ENCODE measurements at regions of chr1 and their contacts with region 1.

Region 1: DNA sequence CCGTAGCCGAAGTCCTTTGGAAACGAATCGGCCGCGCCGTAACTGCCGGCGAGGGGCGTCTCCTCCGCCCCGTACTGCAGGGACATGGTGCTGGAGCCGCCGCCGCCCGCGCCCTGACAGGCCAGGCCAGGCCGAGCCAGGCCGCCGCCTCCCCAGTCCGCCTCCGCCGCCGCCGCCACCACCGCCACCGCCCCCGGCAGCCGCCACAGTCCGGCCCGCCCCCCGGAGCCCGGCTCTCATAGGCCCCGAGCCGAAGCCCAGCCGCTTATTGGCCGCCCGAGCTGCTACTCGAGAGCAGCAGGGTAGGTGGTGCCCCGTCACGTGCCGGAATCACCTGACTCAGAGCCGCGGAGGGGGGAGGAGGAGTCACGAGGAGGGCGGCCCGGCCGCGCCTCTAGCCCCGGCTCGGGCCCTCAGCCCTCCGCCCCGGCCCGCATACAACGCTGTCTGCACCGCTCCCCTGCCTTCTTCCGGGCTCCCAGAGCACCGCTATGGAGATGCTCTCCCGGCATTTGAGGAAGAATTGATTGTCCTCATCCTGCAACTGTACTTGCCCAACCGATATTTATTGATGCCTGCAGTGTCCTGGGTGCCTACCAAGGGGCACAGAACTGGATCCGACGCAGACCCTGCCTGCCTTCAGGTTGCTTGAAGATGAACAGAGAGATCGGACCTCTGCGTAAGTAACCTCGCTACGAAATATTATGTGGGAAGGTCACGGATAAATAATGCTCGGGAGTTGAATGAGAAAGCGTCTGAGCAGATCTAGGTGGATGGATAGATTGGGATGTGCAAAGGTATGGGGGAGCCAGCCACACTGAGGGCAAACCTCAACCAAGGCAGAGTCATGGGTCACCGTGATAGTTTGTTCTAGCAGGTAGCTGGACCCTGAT is at the start of gene RRAGC:
- DNase-seq: peak; percentile 98
- ATAC-seq: peak; percentile 92
- H3K4me3 ChIP-seq: peak within 1 kb of the TSS; percentile 68 to 92 (median 85)
- H3K4me3 Mint-ChIP-seq: peak within 1 kb of the TSS; percentile 93
- H3K27ac ChIP-seq: peak within 1 kb of the TSS; percentile 82 to 91
- H3K27ac Mint-ChIP-seq: peak within 1 kb of the TSS; percentile 96
- H3K4me1 ChIP-seq: peaks cover 22 to 31% of the 10 kb centered on the region in 2 donors
- H3K4me1 Mint-ChIP-seq: peaks cover 53% of the 10 kb centered on the region
- H3K27me3 ChIP-seq: no peaks in the 10 kb centered on the region
- H3K27me3 Mint-ChIP-seq: no peaks in the 10 kb centered on the region
- CTCF ChIP-seq: no peak
- total RNA-seq, gene RRAGC: 37.6 and 39.3 TPM in 2 replicates

Region 2: GRCh38 chr1:37919277-37919676 is 940.5 kb before region 1 on chr1:
- CTCF ChIA-PET with region 1: no interaction called
- POLR2A ChIA-PET with region 1: no interaction called
- intact Hi-C with region 1: loop called (anchors 2 kb)
- DNase-seq: peak; percentile 23
- ATAC-seq: no peak
- H3K4me3 ChIP-seq: no peak overlapping the region
- H3K4me3 Mint-ChIP-seq: no peak overlapping the region
- H3K27ac ChIP-seq: no peak overlapping the region
- H3K27ac Mint-ChIP-seq: no peak overlapping the region
- H3K4me1 ChIP-seq: peaks cover 55 to 56% of the 10 kb centered on the region in 2 donors
- H3K4me1 Mint-ChIP-seq: peaks cover 45% of the 10 kb centered on the region
- H3K27me3 ChIP-seq: no peaks in the 10 kb centered on the region
- H3K27me3 Mint-ChIP-seq: no peaks in the 10 kb centered on the region
- CTCF ChIP-seq: peak; percentile 53

Region 3: DNA sequence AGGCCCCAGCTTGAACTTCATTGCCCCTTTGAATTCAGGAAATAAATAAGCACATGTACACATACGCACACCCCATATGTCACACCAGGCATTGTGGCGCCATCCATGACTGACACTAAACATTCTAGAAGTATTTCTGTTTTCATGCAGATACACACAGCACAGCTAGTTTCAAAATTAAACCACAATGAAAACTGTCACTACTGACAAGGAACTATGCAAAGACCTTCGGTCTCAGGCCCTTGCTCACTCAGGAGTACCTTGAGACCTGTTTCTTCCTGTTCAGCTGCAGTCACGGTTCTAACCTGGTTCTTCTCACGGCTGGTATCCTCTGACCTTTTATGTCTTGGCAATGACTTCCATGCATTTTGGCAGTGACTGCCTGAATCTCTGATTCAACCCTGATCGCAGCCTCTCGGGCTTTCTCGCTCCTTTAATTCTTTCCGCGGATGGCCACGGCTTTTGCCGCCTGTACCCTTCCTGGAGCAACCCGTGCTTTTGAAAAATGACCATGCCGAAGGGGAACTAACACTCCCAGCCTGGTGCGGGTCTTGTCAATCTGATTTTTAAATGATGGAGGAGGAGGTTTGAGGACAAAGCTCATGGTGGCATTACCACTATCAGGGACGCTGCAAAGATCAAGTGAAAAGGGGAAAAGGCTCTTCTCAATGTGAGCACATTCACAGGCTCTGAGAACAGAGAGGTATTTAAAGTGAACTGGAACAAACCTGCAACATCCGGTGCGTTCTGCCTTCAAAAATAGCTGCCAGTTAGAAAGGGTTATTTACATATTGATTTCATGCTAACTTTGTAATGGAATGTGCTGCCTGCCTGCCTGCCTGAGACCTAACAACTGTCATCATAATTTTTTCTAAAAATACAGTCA is 384.8 kb before region 1 on chr1:
- CTCF ChIA-PET with region 1: no interaction called
- POLR2A ChIA-PET with region 1: no interaction called
- intact Hi-C with region 1: loop called (anchors 5 kb)
- DNase-seq: peak; percentile 88
- ATAC-seq: peak; percentile 80
- H3K4me3 ChIP-seq: peak overlapping the region; percentile 51 to 74 (median 62)
- H3K4me3 Mint-ChIP-seq: peak overlapping the region; percentile 94
- H3K27ac ChIP-seq: peak overlapping the region; percentile 90 to 96
- H3K27ac Mint-ChIP-seq: peak overlapping the region; percentile 99
- H3K4me1 ChIP-seq: peaks cover 34 to 49% of the 10 kb centered on the region in 2 donors
- H3K4me1 Mint-ChIP-seq: peaks cover 69% of the 10 kb centered on the region
- H3K27me3 ChIP-seq: no peaks in the 10 kb centered on the region
- H3K27me3 Mint-ChIP-seq: no peaks in the 10 kb centered on the region
- CTCF ChIP-seq: no peak

Region 4: DNA sequence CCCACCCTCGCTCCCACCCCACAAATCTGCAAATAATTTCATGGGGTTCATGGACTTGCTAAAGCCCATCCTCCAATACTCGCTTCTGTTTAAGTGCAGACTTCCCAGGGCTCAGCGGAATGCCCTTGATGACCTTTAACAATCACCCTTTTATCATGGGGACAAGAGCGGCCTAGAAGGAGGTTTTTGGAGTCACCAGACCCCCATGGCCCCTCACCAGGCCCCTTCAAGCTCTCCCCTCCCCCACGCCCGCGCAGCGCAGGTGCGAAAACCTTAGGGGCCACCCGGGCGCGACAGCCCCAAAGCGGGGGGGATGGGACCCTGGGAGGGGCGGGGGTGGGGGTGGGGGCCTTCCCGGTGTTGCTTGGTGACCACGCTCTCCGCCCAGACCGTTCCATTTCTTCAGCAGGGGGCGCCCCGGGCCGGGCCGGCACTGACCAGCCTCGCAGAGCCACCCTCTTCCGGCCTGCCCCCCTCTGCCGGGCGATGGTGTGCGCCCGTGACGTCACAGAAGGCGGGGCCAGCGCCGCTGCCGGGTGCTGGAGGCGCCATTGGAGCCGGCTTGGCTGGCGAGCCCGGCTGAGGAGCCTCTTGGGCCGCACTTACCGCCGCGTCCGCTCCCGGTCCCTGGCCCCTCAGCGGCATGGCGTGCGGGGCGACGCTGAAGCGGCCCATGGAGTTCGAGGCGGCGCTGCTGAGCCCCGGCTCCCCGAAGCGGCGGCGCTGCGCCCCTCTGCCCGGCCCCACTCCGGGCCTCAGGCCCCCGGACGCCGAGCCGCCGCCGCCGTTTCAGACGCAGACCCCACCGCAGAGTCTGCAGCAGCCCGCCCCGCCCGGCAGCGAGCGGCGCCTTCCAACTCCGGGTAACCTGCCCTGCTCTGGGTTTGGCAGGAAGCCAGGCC is 131.2 kb after region 1 on chr1 and contains the start of gene AKIRIN1:
- CTCF ChIA-PET with region 1: no interaction called
- POLR2A ChIA-PET with region 1: interaction called, 3 read pairs
- intact Hi-C with region 1: loop called (anchors 1 kb)
- DNase-seq: peak; percentile 96
- ATAC-seq: peak; percentile 92
- H3K4me3 ChIP-seq: peak within 1 kb of the TSS; percentile 58 to 89 (median 80)
- H3K4me3 Mint-ChIP-seq: peak within 1 kb of the TSS; percentile 89
- H3K27ac ChIP-seq: peak within 1 kb of the TSS; percentile 86 to 95
- H3K27ac Mint-ChIP-seq: peak within 1 kb of the TSS; percentile 89
- H3K4me1 ChIP-seq: peaks cover 19 to 22% of the 10 kb centered on the region in 2 donors
- H3K4me1 Mint-ChIP-seq: peaks cover 30% of the 10 kb centered on the region
- H3K27me3 ChIP-seq: peaks cover 0 to under 1% (median 0%) of the 10 kb centered on the region in 4 experiments
- H3K27me3 Mint-ChIP-seq: peaks cover 3% of the 10 kb centered on the region
- CTCF ChIP-seq: no peak
- total RNA-seq, gene AKIRIN1: 59.7 and 61.9 TPM in 2 replicates

Region 5: DNA sequence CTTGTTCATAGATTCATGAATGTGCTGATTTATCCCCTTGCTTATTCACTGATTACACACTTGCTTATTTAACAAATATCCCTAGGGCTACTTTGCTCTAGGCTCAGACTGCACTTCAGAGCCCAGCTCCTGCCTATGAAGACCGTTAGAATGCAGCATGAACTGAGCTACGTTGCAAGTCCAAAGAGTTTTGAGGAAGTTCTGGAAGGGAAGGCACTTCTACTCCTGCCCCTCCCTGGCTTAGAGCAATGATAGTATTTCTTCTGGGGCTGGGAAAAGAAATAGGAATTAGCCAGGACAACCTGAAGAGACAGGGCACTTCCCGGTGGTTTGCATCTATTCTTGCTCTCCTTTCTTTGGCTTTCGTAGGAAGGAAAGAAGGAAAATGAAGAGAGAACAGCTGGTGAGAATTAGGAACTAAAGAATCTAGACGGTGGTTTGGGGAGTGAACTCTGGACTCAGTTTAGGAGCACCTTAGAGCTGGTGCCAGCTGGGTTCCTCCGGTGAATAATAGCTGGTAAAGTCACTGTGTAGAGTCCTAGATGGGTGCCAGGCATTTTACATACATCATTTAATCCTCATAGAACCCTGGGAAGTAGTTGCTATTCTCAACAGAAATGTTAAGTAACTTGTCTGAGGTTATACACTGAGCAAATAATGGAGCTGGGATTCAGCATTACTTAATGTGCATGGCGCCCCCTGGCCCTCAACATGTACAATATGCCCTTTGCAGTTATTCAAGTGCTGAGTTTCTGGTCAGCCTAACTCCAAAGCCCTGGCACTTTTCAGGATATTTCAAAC is 232.2 kb after region 1 on chr1:
- CTCF ChIA-PET with region 1: interaction called, 3 read pairs
- POLR2A ChIA-PET with region 1: no interaction called
- intact Hi-C with region 1: loop called (anchors 2 kb)
- DNase-seq: peak; percentile 56
- ATAC-seq: peak; percentile 57
- H3K4me3 ChIP-seq: no peak overlapping the region
- H3K4me3 Mint-ChIP-seq: peak overlapping the region; percentile 46
- H3K27ac ChIP-seq: no peak overlapping the region
- H3K27ac Mint-ChIP-seq: no peak overlapping the region
- H3K4me1 ChIP-seq: no peaks in the 10 kb centered on the region
- H3K4me1 Mint-ChIP-seq: peaks cover 6% of the 10 kb centered on the region
- H3K27me3 ChIP-seq: no peaks in the 10 kb centered on the region
- H3K27me3 Mint-ChIP-seq: peaks cover 4% of the 10 kb centered on the region
- CTCF ChIP-seq: peak; percentile 55

Measured in B cell (primary cell).